B cell (primary cell): ENCODE measurements at regions of chr17 and their contacts with region 1.

Region 1: DNA sequence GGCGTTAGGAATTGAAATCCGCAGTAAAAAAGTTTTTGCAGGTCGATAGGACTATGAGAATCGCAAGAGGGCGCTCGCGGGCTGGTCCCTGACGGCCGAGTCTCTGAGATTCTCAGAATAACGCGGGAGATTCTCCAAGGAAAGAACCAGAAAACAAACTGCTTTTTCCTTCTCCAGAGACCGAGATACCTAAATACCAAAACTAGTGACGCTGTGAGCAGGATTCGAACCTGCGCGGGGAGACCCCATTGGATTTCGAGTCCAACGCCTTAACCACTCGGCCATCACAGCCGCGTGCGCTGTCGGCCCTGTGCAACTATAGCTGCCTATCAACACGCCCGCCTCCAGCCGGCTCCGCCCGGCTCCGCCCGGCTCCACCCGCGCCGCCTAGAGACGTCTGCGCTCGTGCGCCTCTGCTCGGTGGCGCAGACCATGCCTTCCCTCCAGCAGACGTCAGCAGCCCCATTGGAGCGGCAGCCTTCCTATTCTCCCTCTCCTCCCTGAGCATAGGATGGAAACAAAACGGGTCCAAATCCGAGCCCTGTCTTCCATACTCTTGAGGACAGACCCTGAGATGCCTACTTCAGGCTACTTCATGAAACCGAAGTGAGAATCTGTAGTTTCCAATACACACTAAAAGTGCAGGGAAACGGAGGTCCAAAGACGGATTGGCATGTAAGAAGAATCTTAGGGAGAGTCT is 13.4 kb downstream of the PER1 start:
- DNase-seq: peak; percentile 98
- ATAC-seq: peak; percentile 96
- H3K4me3 ChIP-seq: peak overlapping the region; percentile 62 to 84 (median 72)
- H3K4me3 Mint-ChIP-seq: no peak overlapping the region
- H3K27ac ChIP-seq: peak overlapping the region; percentile 84 to 98
- H3K27ac Mint-ChIP-seq: no peak overlapping the region
- H3K4me1 ChIP-seq: peaks cover 10 to 20% of the 10 kb centered on the region in 2 donors
- H3K4me1 Mint-ChIP-seq: peaks cover 2% of the 10 kb centered on the region
- H3K27me3 ChIP-seq: no peaks in the 10 kb centered on the region
- H3K27me3 Mint-ChIP-seq: no peaks in the 10 kb centered on the region
- CTCF ChIP-seq: peak; percentile 94

Region 2: DNA sequence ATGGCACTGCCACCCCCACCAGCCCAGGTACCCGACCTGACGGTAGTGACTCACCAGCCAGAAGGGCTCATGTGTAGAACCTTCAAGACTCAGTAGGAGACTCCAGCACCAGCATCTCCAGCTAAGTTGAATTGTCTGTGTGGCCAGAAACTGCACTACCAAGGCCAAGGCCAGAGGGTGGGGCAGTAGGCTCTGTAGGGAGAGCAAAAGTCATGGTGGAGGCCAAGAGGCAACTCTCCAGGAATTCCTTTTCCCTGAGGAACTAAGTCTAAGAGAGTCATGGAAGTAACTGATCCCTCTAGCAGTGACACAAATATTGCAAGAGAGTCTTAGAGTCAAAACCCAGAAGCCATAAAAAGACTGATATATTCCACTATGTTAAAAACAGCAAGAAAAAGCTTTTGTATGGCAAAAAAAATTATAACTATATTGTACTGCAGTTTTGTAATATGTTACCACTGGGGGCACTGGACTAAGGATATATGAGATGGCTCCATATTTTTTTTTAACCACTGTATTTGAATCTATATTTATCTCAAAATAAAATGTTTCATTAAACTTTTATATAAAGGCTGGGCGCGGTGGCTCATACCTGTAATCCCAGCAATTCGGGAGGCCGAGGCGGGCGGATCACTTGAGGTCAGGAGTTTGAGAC is 166.6 kb before region 1 on chr17:
- CTCF ChIA-PET with region 1: no interaction called
- POLR2A ChIA-PET with region 1: no interaction called
- intact Hi-C with region 1: no loop called
- DNase-seq: no peak
- ATAC-seq: no peak
- H3K4me3 ChIP-seq: no peak overlapping the region
- H3K4me3 Mint-ChIP-seq: no peak overlapping the region
- H3K27ac ChIP-seq: no peak overlapping the region
- H3K27ac Mint-ChIP-seq: no peak overlapping the region
- H3K4me1 ChIP-seq: no peaks in the 10 kb centered on the region
- H3K4me1 Mint-ChIP-seq: no peaks in the 10 kb centered on the region
- H3K27me3 ChIP-seq: peaks cover 0 to 11% (median 0%) of the 10 kb centered on the region in 4 experiments
- H3K27me3 Mint-ChIP-seq: peaks cover 7% of the 10 kb centered on the region
- CTCF ChIP-seq: peak; percentile 21

Region 3: DNA sequence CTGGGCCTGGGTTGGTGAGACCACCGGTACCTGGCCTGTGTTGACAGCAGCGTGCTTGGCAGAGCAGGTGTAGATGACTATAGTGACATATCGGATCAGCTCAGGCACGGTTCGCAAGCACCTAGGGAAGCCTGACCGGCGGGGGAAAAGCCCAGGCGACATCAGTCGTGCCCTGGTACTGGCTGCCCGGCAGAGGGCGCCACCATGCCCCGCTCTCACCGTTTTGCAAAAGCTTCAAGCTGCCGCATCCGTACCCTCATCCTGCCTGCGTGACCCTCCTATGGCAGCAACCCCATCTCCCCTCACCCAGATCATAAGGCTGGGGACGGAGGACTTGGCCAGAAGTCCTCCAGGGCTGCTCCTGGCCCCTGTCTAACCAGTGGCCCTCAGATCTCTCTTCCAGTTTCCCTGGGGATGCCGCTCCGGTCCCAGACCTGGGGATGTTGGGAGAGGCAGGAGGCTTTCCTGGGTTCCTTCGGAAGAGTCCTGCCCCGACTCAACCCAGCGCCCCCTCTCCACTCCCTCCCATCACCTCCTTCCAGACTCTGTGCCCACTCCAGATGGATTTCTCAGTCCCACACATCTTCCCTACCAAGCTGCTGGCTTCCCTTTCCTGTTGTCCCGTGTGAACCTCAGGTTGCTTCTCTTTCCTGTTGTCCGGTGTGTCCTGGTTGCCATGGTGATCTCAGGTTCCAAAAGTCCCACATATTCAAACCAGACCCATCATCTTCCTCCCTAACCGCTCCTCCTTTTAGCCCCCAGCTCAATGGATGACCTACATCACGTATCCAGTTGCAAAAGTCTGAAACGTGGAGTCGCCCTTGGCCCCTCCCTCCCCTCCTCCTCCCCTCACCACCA is 65.0 kb before region 1 on chr17:
- CTCF ChIA-PET with region 1: interaction called, 10 read pairs
- POLR2A ChIA-PET with region 1: no interaction called
- intact Hi-C with region 1: no loop called
- DNase-seq: peak; percentile 95
- ATAC-seq: peak; percentile 95
- H3K4me3 ChIP-seq: peak overlapping the region in 1 of 5 experiments; percentile 34
- H3K4me3 Mint-ChIP-seq: peak overlapping the region; percentile 81
- H3K27ac ChIP-seq: no peak overlapping the region
- H3K27ac Mint-ChIP-seq: peak overlapping the region; percentile 57
- H3K4me1 ChIP-seq: peaks cover 28 to 29% of the 10 kb centered on the region in 2 donors
- H3K4me1 Mint-ChIP-seq: peaks cover 27% of the 10 kb centered on the region
- H3K27me3 ChIP-seq: peaks cover 0 to 57% (median 39%) of the 10 kb centered on the region in 4 experiments
- H3K27me3 Mint-ChIP-seq: peaks cover 46% of the 10 kb centered on the region
- CTCF ChIP-seq: peak; percentile 95

Region 4: GRCh38 chr17:8151123-8151640 is 12.4 kb after region 1 on chr17:
- CTCF ChIA-PET with region 1: interaction called, 86 read pairs
- POLR2A ChIA-PET with region 1: interaction called, 36 read pairs
- intact Hi-C with region 1: loop called (anchors 1 kb)
- DNase-seq: peak; percentile 95
- ATAC-seq: peak; percentile 60
- H3K4me3 ChIP-seq: peak overlapping the region; percentile 9 to 76 (median 69)
- H3K4me3 Mint-ChIP-seq: peak overlapping the region; percentile 94
- H3K27ac ChIP-seq: peak overlapping the region; percentile 63 to 80
- H3K27ac Mint-ChIP-seq: peak overlapping the region; percentile 87
- H3K4me1 ChIP-seq: peaks cover 50 to 64% of the 10 kb centered on the region in 2 donors
- H3K4me1 Mint-ChIP-seq: peaks cover 42% of the 10 kb centered on the region
- H3K27me3 ChIP-seq: no peaks in the 10 kb centered on the region
- H3K27me3 Mint-ChIP-seq: no peaks in the 10 kb centered on the region
- CTCF ChIP-seq: no peak

Region 5: GRCh38 chr17:8173056-8173870 is 34.4 kb after region 1 on chr17:
- CTCF ChIA-PET with region 1: interaction called, 5 read pairs
- POLR2A ChIA-PET with region 1: interaction called, 16 read pairs
- intact Hi-C with region 1: loop called (anchors 1 kb)
- DNase-seq: peak; percentile 95
- ATAC-seq: peak; percentile 83
- H3K4me3 ChIP-seq: peak overlapping the region; percentile 32 to 96 (median 63)
- H3K4me3 Mint-ChIP-seq: peak overlapping the region; percentile 94
- H3K27ac ChIP-seq: peak overlapping the region; percentile 95 to 99
- H3K27ac Mint-ChIP-seq: peak overlapping the region; percentile 100
- H3K4me1 ChIP-seq: peaks cover 24 to 38% of the 10 kb centered on the region in 2 donors
- H3K4me1 Mint-ChIP-seq: peaks cover 46% of the 10 kb centered on the region
- H3K27me3 ChIP-seq: no peaks in the 10 kb centered on the region
- H3K27me3 Mint-ChIP-seq: no peaks in the 10 kb centered on the region
- CTCF ChIP-seq: no peak

Region 6: DNA sequence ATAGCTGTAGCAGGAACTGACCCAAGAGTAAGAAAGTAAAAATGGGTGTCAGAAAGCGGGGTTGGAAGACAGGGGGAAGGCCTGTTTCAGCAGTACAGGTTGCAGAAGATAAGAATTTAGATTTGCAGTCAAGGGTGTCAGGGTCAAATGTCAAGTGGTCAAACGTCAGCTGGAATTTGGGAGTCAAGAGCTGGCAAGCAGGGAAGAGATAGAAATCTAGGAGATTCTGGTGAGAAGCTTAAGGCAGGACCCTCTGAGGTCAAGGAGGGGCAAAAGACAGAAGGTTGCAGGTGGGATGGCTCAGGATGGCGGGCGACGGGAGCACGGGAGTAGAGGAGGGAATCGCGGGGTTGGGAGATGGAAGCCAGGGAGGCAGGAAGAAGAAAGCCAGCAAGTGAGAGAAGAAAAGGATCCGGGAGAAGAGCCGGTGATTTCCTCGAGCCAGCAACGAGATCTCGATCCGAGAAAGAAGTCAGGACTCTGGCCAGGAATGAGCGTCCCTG is 156.0 kb after region 1 on chr17:
- CTCF ChIA-PET with region 1: interaction called, 20 read pairs
- POLR2A ChIA-PET with region 1: interaction called, 3 read pairs
- intact Hi-C with region 1: loop called (anchors 1 kb)
- DNase-seq: no peak
- ATAC-seq: no peak
- H3K4me3 ChIP-seq: peak overlapping the region; percentile 41 to 93 (median 89)
- H3K4me3 Mint-ChIP-seq: peak overlapping the region; percentile 94
- H3K27ac ChIP-seq: peak overlapping the region; percentile 78
- H3K27ac Mint-ChIP-seq: peak overlapping the region; percentile 95
- H3K4me1 ChIP-seq: peaks cover 5 to 21% of the 10 kb centered on the region in 2 donors
- H3K4me1 Mint-ChIP-seq: peaks cover 32% of the 10 kb centered on the region
- H3K27me3 ChIP-seq: no peaks in the 10 kb centered on the region
- H3K27me3 Mint-ChIP-seq: no peaks in the 10 kb centered on the region
- CTCF ChIP-seq: no peak